CD8-positive, alpha-beta T cell (primary cell): ENCODE measurements at regions of chr4 and their contacts with region 1.

Region 1: GRCh38 chr4:110211007-110211769 is 12.8 kb upstream of the ELOVL6 start:
- DNase-seq: peak in 6 of 9 experiments; percentile 7 to 74 (median 38)
- ATAC-seq: peak; percentile 69
- H3K4me3 ChIP-seq: no peak overlapping the region
- H3K4me3 Mint-ChIP-seq: no peak overlapping the region
- H3K27ac ChIP-seq: no peak overlapping the region
- H3K27ac Mint-ChIP-seq: no peak overlapping the region
- H3K4me1 ChIP-seq: no peaks in the 10 kb centered on the region
- H3K4me1 Mint-ChIP-seq: peaks cover 4% of the 10 kb centered on the region
- H3K27me3 ChIP-seq: no peaks in the 10 kb centered on the region
- H3K27me3 Mint-ChIP-seq: no peaks in the 10 kb centered on the region
- CTCF ChIP-seq: peak; percentile 83

Region 2: GRCh38 chr4:109998867-109999584 is 212.2 kb before region 1 on chr4:
- CTCF ChIA-PET with region 1: interaction called, 3 read pairs
- POLR2A ChIA-PET with region 1: interaction called, 3 read pairs
- intact Hi-C with region 1: loop called in 1 of 2 experiments (anchors 2 kb)
- DNase-seq: peak in 3 of 9 experiments; percentile 39 to 81 (median 77)
- ATAC-seq: peak; percentile 63
- H3K4me3 ChIP-seq: no peak overlapping the region
- H3K4me3 Mint-ChIP-seq: no peak overlapping the region
- H3K27ac ChIP-seq: no peak overlapping the region
- H3K27ac Mint-ChIP-seq: no peak overlapping the region
- H3K4me1 ChIP-seq: no peaks in the 10 kb centered on the region
- H3K4me1 Mint-ChIP-seq: no peaks in the 10 kb centered on the region
- H3K27me3 ChIP-seq: no peaks in the 10 kb centered on the region
- H3K27me3 Mint-ChIP-seq: peaks cover 8% of the 10 kb centered on the region
- CTCF ChIP-seq: peak; percentile 91

Region 3: GRCh38 chr4:110005461-110006056 is 205.6 kb before region 1 on chr4:
- CTCF ChIA-PET with region 1: interaction called, 5 read pairs
- POLR2A ChIA-PET with region 1: interaction called, 3 read pairs
- intact Hi-C with region 1: loop called (anchors 1 to 5 kb)
- DNase-seq: peak in 2 of 9 experiments; percentile 68 to 78
- ATAC-seq: peak; percentile 54
- H3K4me3 ChIP-seq: no peak overlapping the region
- H3K4me3 Mint-ChIP-seq: no peak overlapping the region
- H3K27ac ChIP-seq: no peak overlapping the region
- H3K27ac Mint-ChIP-seq: no peak overlapping the region
- H3K4me1 ChIP-seq: no peaks in the 10 kb centered on the region
- H3K4me1 Mint-ChIP-seq: no peaks in the 10 kb centered on the region
- H3K27me3 ChIP-seq: peaks cover 0 to 2% of the 10 kb centered on the region in 2 experiments
- H3K27me3 Mint-ChIP-seq: peaks cover 4% of the 10 kb centered on the region
- CTCF ChIP-seq: peak; percentile 92

Region 4: GRCh38 chr4:110049951-110050925 is 160.9 kb before region 1 on chr4:
- CTCF ChIA-PET with region 1: interaction called, 73 read pairs
- POLR2A ChIA-PET with region 1: no interaction called
- intact Hi-C with region 1: loop called (anchors 1 kb)
- DNase-seq: peak; percentile 22 to 72 (median 56)
- ATAC-seq: peak; percentile 71
- H3K4me3 ChIP-seq: no peak overlapping the region
- H3K4me3 Mint-ChIP-seq: no peak overlapping the region
- H3K27ac ChIP-seq: no peak overlapping the region
- H3K27ac Mint-ChIP-seq: no peak overlapping the region
- H3K4me1 ChIP-seq: no peaks in the 10 kb centered on the region
- H3K4me1 Mint-ChIP-seq: no peaks in the 10 kb centered on the region
- H3K27me3 ChIP-seq: no peaks in the 10 kb centered on the region
- H3K27me3 Mint-ChIP-seq: no peaks in the 10 kb centered on the region
- CTCF ChIP-seq: peak; percentile 71

Region 5: GRCh38 chr4:110510955-110511544 is 299.9 kb after region 1 on chr4:
- CTCF ChIA-PET with region 1: no interaction called
- POLR2A ChIA-PET with region 1: no interaction called
- intact Hi-C with region 1: loop called (anchors 1 to 5 kb)
- DNase-seq: peak in 2 of 9 experiments; percentile 58 to 70
- ATAC-seq: peak; percentile 51
- H3K4me3 ChIP-seq: no peak overlapping the region
- H3K4me3 Mint-ChIP-seq: no peak overlapping the region
- H3K27ac ChIP-seq: no peak overlapping the region
- H3K27ac Mint-ChIP-seq: no peak overlapping the region
- H3K4me1 ChIP-seq: peaks cover 10% of the 10 kb centered on the region
- H3K4me1 Mint-ChIP-seq: peaks cover 10% of the 10 kb centered on the region
- H3K27me3 ChIP-seq: no peaks in the 10 kb centered on the region
- H3K27me3 Mint-ChIP-seq: peaks cover 2% of the 10 kb centered on the region
- CTCF ChIP-seq: peak; percentile 86